ENCODE measurements at regions of chr4 and their contacts with region 1.

Region 1: GRCh38 chr4:152510349-152511147 is 25.3 kb downstream of the FBXW7 start:
- DNase-seq: no peak
- H3K4me3 ChIP-seq: no peak overlapping the region
- H3K27ac ChIP-seq: no peak overlapping the region
- H3K4me1 ChIP-seq: peaks cover 16% of the 10 kb centered on the region
- H3K27me3 ChIP-seq: no peaks in the 10 kb centered on the region
- CTCF ChIP-seq: no peak

Region 2: GRCh38 chr4:152460488-152460887 is 50.1 kb before region 1 on chr4:
- CTCF ChIA-PET with region 1: no interaction called
- dilution Hi-C with region 1: loop called (anchors 5 kb)
- in situ Hi-C with region 1: no loop called
- intact Hi-C with region 1: no loop called
- DNase-seq: peak; percentile 14
- H3K4me3 ChIP-seq: no peak overlapping the region
- H3K27ac ChIP-seq: no peak overlapping the region
- H3K4me1 ChIP-seq: no peaks in the 10 kb centered on the region
- H3K27me3 ChIP-seq: no peaks in the 10 kb centered on the region
- CTCF ChIP-seq: no peak

Measured in mammary epithelial cell (primary cell).